ENCODE measurements at regions of chr20 and their contacts with region 1.

Region 1: GRCh38 chr20:25195014-25195961 is at the start of gene ENTPD6:
- DNase-seq: peak; percentile 94 to 97 (median 94)
- ATAC-seq: peak; percentile 71 to 88 (median 88)
- H3K4me3 ChIP-seq: peak within 1 kb of the TSS; percentile 63 to 99 (median 90)
- H3K27ac ChIP-seq: peak within 1 kb of the TSS; percentile 79 to 98 (median 93)
- H3K4me1 ChIP-seq: peaks cover 0 to 70% (median 42%) of the 10 kb centered on the region in 12 donors
- H3K27me3 ChIP-seq: no peaks in the 10 kb centered on the region
- CTCF ChIP-seq: peak in 6 of 12 donors; percentile 15 to 52 (median 40)
- POLR2A ChIP-seq: peak; percentile 52 to 85
- total RNA-seq, gene ENTPD6: 58.7 to 139 (median 86.7) TPM

Region 2: DNA sequence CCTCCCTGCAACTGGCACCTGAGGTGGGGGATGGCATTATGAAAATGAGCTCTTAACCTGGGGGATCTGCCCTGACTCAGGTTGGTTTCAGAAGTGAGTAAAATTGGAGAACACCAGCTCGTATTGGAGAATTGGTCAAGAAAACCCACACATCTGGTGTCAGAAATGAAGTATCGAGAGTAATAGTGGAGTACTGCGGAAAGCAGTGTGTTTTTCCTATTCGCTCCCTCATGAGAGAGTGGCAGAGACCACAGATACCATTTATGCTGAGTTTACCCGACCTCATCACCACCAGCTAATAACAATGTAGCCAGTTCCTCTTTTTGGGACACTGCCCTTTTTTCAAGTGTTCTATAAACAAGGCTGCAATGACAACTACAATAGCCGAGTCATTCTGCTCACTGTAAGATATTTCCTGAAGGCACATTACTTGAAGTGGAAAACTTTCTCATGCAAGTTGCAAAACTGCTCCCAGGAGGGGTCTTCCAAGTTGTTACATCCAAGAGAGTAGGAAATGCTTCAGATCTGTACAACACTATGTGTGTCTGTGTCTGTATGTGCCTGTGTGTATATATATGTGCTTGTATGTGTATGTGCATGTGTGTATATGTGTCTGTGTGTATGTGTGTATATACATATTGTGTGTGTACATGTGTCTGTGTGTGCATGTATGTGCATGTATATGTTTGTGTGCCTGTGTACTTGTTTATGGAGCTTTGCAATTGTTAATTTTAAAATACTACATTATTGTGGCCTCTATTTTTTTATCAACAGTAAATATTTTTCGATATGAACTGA is 352.2 kb before region 1 on chr20:
- intact Hi-C with region 1: no loop called
- DNase-seq: no peak
- ATAC-seq: peak in 1 of 4 donors; percentile 38
- H3K4me3 ChIP-seq: no peak overlapping the region
- H3K27ac ChIP-seq: no peak overlapping the region
- H3K4me1 ChIP-seq: no peaks in the 10 kb centered on the region
- H3K27me3 ChIP-seq: peaks cover 0 to 4% (median 0%) of the 10 kb centered on the region in 9 donors
- CTCF ChIP-seq: no peak
- POLR2A ChIP-seq: no peak

Region 3: GRCh38 chr20:25136643-25137559 is 58.4 kb before region 1 on chr20:
- intact Hi-C with region 1: loop called in 1 of 10 experiments (anchors 10 kb)
- DNase-seq: peak; percentile 71 to 87 (median 78)
- ATAC-seq: peak; percentile 92 to 98 (median 98)
- H3K4me3 ChIP-seq: no peak overlapping the region
- H3K27ac ChIP-seq: peak overlapping the region in 1 of 12 donors; percentile 4
- H3K4me1 ChIP-seq: peaks cover 0 to 13% (median 2%) of the 10 kb centered on the region in 12 donors
- H3K27me3 ChIP-seq: peaks cover 0 to 11% (median 0%) of the 10 kb centered on the region in 9 donors
- CTCF ChIP-seq: no peak
- POLR2A ChIP-seq: no peak

Region 4: DNA sequence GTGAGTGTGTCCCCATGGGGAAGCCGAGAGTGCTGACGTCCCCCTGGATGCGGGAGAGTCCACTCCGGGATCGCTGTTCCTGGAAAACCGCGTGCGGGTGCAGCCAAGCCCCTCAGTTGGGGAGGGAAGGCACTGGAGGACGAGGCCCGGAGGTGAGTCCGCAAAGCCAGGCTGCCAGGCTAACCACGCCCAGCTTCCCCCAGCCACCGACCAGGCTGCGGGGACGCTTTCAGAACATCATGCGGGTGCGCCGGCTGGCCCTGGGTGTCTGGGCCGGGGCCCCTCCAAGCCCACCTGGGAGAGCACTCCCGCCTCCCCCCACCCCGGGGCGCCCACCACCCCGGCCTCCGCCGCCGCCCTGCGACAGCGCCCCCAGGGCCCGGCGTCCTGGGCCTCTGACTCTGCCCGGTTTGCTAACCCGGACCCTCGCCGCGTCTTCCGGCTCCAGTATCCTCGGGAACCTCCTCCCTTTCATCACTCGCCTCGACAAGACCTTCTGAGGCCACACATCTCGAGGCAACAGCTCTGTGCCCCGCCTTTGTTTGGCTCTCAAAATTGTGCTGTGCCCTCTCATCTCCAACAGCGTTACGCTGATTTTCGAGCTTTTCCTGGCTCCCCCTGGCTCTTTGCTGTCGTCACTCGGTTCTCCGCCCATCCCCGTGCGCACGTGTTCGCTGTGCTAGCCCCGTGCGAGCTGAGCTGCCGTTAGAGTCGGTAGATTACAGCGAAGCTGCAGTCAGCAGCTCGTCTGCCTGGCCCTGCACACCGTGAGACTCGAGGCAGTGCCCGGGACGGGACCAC is 46.9 kb before region 1 on chr20:
- intact Hi-C with region 1: no loop called
- DNase-seq: peak in 2 of 5 donors; percentile 48 to 58
- ATAC-seq: peak in 3 of 4 donors; percentile 70 to 82 (median 78)
- H3K4me3 ChIP-seq: peak overlapping the region in 9 of 12 donors; percentile 12 to 50 (median 39)
- H3K27ac ChIP-seq: no peak overlapping the region
- H3K4me1 ChIP-seq: peaks cover 0 to 12% (median 8%) of the 10 kb centered on the region in 12 donors
- H3K27me3 ChIP-seq: peaks cover 4 to 46% (median 28%) of the 10 kb centered on the region in 9 donors
- CTCF ChIP-seq: no peak
- POLR2A ChIP-seq: no peak